Common myeloid progenitor, CD34-positive (primary cell): ENCODE measurements at regions of chr1 and their contacts with region 1.

Region 1: GRCh38 chr1:234486498-234487448 is 7.8 kb upstream of the TARBP1 start:
- DNase-seq: peak; percentile 75 to 88 (median 83)
- H3K4me3 ChIP-seq: no peak overlapping the region
- H3K27ac ChIP-seq: no peak overlapping the region
- H3K4me1 ChIP-seq: peaks cover 11 to 30% (median 25%) of the 10 kb centered on the region in 4 experiments
- H3K27me3 ChIP-seq: no peaks in the 10 kb centered on the region

Region 2: DNA sequence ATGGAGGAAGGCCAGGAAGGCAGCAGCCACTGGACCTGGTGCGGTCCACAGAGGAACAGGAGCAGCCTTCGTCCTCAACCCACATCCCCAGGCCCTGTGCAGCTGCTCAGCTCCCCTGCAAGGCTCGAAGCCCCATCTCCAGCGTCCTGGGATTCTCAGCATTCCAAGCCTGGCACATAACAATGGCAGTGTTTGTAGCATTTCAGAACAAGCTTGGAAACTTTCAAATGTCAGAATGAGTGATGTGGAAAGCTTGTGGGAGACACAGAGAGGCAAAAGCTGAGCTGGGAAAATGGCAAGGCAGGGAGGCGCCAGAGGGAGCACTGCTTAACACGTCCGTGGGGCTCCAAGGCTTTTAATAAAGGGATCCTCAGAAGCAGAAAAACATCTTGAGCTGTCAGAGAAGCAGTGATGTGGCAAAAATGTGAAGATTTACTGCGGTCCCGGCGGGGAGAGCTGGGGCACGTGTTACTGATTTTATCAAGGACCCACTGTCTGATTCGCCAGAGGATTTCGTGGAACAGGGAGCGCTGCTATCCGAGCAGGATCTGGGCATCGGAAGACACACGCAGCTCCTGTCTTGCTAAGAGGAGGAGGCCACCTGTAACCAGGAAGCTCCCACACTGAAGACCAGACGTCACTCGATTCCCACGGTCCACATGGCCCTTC is 603.8 kb after region 1 on chr1:
- CTCF ChIA-PET with region 1: interaction called, 13 read pairs
- POLR2A ChIA-PET with region 1: no interaction called
- DNase-seq: peak; percentile 61 to 90 (median 87)
- H3K4me3 ChIP-seq: peak overlapping the region in 2 of 7 experiments; percentile 22 to 50
- H3K27ac ChIP-seq: no peak overlapping the region
- H3K4me1 ChIP-seq: peaks cover 0 to 34% (median 21%) of the 10 kb centered on the region in 4 experiments
- H3K27me3 ChIP-seq: no peaks in the 10 kb centered on the region